ENCODE measurements at regions of chr18 and their contacts with region 1.

Region 1: GRCh38 chr18:13726232-13726971 is at the starts of genes FAM210A and RNMT:
- DNase-seq: peak; percentile 98
- H3K4me3 ChIP-seq: peak within 1 kb of the TSS; percentile 80 to 98 (median 94)
- H3K27ac ChIP-seq: peak within 1 kb of the TSS; percentile 93 to 95 (median 95)
- H3K4me1 ChIP-seq: peaks cover 0 to 31% (median 29%) of the 10 kb centered on the region in 4 donors
- H3K27me3 ChIP-seq: no peaks in the 10 kb centered on the region
- CTCF ChIP-seq: no peak
- EP300 ChIP-seq: peak in 2 of 4 donors; percentile 47 to 94
- POLR2A ChIP-seq: peak; percentile 51 to 63
- total RNA-seq, gene FAM210A: 9.0 to 19.6 (median 14.0) TPM
- total RNA-seq, gene RNMT: 16.1 to 22.3 (median 21.7) TPM

Region 2: GRCh38 chr18:12702221-12703095 is 1023.9 kb before region 1 on chr18 and contains the starts of genes CEP76 and PSMG2:
- intact Hi-C with region 1: loop called (anchors 5 kb)
- DNase-seq: peak; percentile 93
- H3K4me3 ChIP-seq: peak within 1 kb of the TSS; percentile 68 to 92 (median 88)
- H3K27ac ChIP-seq: peak within 1 kb of the TSS; percentile 90 to 95 (median 94)
- H3K4me1 ChIP-seq: peaks cover 0 to 34% (median 27%) of the 10 kb centered on the region in 4 donors
- H3K27me3 ChIP-seq: no peaks in the 10 kb centered on the region
- CTCF ChIP-seq: no peak
- EP300 ChIP-seq: no peak
- POLR2A ChIP-seq: peak; percentile 70 to 79
- total RNA-seq, gene CEP76: 5.8 to 9.1 (median 8.1) TPM
- total RNA-seq, gene PSMG2: 85.1 to 100 (median 92.4) TPM

Region 3: DNA sequence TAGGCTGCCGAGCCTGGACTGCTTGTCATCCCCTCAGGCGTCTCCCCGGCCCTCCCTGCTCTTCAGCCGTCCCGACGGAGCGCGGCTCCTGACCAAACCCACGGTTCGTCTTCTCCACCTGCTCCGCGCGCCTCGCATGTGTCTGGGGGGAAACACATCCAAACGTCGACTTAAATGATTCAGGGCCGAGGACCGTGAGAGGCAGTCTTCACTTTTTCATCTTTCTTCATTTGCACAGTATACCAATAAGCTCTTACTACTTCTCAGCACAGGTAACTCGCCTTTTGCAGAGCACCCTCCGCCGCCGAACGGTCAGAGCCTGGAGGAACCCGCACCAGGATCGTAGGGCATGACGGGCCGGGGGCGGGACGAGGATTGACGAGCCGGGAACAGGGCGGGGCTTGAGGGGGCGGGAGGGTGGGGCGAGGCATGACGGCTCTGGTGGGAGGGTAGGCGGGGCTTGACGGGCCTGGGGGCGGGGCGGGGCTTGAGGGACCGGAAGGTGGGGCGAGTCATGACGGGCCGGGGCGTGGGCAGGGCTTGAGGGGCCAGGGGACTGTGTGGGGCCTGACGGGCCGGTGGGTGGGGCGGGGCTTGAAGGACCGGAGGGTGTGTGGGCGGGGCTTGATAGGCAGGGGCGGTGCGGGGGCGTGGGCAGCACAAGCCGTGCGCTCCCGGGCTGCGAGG is 778.9 kb before region 1 on chr18 and contains the start of gene SEH1L:
- intact Hi-C with region 1: loop called (anchors 5 kb)
- DNase-seq: peak; percentile 100
- H3K4me3 ChIP-seq: peak within 1 kb of the TSS; percentile 55 to 72 (median 64)
- H3K27ac ChIP-seq: peak within 1 kb of the TSS; percentile 94 to 99 (median 98)
- H3K4me1 ChIP-seq: peaks cover 0 to 24% (median 16%) of the 10 kb centered on the region in 4 donors
- H3K27me3 ChIP-seq: no peaks in the 10 kb centered on the region
- CTCF ChIP-seq: no peak
- EP300 ChIP-seq: no peak
- POLR2A ChIP-seq: peak; percentile 52 to 56
- total RNA-seq, gene SEH1L: 15.3 to 38.1 (median 20.3) TPM

Region 4: GRCh38 chr18:13216092-13216582 is 510.3 kb before region 1 on chr18:
- intact Hi-C with region 1: loop called (anchors 2 kb)
- DNase-seq: peak; percentile 90
- H3K4me3 ChIP-seq: no peak overlapping the region
- H3K27ac ChIP-seq: peak overlapping the region in 3 of 4 donors; percentile 51 to 94 (median 88)
- H3K4me1 ChIP-seq: peaks cover 0 to 37% (median 37%) of the 10 kb centered on the region in 4 donors
- H3K27me3 ChIP-seq: no peaks in the 10 kb centered on the region
- CTCF ChIP-seq: peak; percentile 70 to 79 (median 78)
- EP300 ChIP-seq: no peak
- POLR2A ChIP-seq: no peak

Region 5: DNA sequence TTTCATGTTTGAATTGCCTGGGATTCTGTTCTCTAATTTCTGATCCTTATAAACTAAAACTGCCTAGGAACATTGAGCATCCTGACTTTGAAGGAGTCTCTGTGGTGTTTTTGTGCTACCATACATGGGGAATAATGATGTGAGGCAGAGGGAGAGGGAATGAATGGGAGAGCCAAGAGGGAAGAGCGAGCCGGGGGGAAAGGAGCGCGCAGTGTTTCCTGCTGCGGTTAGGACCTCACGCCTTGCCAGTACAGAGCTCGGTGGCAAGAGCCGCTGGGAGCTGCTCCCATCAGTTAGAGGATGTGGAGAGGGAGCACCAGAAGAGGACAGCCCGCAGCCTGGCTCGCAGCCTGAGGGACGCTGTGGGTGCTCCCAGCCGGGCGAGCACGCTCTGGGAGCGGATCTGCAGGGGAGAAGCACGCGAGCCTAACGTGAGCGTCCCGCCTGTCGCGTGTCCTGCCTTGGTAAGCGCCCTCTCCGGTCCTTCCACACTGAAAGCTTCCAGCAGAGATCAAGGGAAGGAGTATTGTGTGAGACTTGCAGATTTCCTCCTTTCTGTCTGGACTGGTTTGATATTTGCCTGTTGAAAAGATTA is 114.7 kb before region 1 on chr18:
- intact Hi-C with region 1: loop called (anchors 10 kb)
- DNase-seq: peak; percentile 74
- H3K4me3 ChIP-seq: peak overlapping the region; percentile 22 to 46 (median 42)
- H3K27ac ChIP-seq: peak overlapping the region; percentile 63 to 80 (median 72)
- H3K4me1 ChIP-seq: peaks cover 0 to 56% (median 28%) of the 10 kb centered on the region in 4 donors
- H3K27me3 ChIP-seq: no peaks in the 10 kb centered on the region
- CTCF ChIP-seq: no peak
- EP300 ChIP-seq: no peak
- POLR2A ChIP-seq: no peak

Measured in sigmoid colon (tissue), 7 donors.